Right cardiac atrium (tissue), 5 donors: ENCODE measurements at regions of chr21 and their contacts with region 1.

Region 1: GRCh38 chr21:26850108-26850643 is 5.0 kb upstream of the ADAMTS1 start:
- DNase-seq: no peak
- ATAC-seq: no peak
- H3K4me3 ChIP-seq: no peak overlapping the region
- H3K27ac ChIP-seq: no peak overlapping the region
- H3K4me1 ChIP-seq: no peaks in the 10 kb centered on the region
- H3K27me3 ChIP-seq: no peaks in the 10 kb centered on the region

Region 2: GRCh38 chr21:27564684-27565301 is 714.6 kb after region 1 on chr21:
- intact Hi-C with region 1: loop called in 2 of 4 experiments (anchors 5 to 10 kb)
- DNase-seq: peak; percentile 39 to 61 (median 59)
- ATAC-seq: peak; percentile 72 to 80
- H3K4me3 ChIP-seq: no peak overlapping the region
- H3K27ac ChIP-seq: no peak overlapping the region
- H3K4me1 ChIP-seq: peaks cover under 1% of the 10 kb centered on the region
- H3K27me3 ChIP-seq: no peaks in the 10 kb centered on the region

Region 3: DNA sequence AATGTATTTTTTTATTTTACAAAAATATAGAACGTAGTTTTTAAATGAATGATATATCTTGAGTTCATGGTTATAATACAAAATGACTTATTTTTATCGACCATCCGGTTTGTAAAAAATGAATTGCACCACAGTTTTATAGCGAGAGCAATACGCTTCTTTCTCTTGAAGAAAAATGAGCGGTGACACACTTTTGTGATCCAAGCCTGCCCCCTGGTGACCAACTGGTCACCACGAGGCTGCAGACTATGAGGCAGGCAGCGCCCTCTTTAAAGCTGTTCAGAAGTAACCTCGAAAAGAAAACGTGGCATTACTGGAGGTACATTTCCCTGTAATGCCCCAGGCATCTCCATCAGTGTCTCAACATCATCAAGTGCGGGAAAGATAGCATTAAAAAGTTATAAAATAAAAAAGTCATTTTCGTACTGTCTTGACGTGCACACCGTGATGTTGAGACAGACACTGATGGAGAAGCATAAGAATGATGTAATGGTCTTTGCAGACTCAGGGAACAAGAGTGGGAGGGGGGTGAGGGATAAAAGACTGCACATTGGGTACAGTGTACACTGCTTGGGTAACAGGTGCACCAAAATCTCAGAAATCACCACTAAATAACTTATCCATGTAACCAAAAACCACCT is 850.9 kb after region 1 on chr21:
- intact Hi-C with region 1: loop called (anchors 2 to 5 kb)
- DNase-seq: peak; percentile 85 to 94 (median 90)
- ATAC-seq: peak; percentile 81 to 89
- H3K4me3 ChIP-seq: no peak overlapping the region
- H3K27ac ChIP-seq: no peak overlapping the region
- H3K4me1 ChIP-seq: no peaks in the 10 kb centered on the region
- H3K27me3 ChIP-seq: no peaks in the 10 kb centered on the region

Region 4: DNA sequence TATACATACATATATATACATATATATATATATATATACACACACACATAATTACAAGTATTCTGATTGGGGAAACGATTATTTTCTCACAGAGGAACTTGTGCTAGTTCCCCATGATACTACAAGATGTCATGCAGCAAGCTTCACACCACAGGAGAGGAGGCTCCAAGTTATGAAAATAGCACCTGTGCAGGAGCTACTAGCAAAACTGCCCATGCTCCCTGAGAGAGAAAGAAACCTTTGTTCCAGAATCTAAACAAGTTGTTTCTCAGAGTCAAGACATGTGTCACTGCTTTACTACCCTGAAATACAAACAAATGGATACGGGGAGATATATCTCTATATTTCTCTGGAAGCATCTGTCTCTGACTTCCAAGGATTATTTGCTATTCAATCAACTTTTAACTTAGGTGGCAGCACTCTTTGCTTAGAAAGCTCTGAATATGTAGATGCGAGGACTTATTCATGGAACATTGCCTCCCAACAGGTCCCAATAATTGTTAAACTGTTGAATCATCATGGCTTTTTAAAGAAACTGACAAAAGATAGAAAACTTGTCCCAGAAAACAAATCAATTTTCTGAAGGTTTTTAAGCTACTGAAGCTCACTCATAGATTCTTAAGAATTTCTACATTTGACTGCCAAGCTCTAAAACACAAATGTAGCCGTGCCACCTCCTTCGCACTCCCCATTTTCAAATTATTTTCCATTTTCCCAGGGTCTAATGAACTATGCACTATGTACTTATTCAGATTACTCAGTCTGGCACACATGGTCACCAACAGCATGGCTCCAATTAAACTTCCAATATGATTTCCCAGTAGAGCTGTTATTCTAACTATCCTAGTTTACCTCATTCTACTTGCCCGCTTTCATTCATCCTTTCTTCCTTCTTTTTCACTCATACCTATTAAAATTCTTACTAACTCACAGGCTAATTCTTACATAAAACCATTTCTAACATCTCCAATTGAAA is 1213.4 kb after region 1 on chr21:
- intact Hi-C with region 1: loop called in 2 of 4 experiments (anchors 10 kb)
- DNase-seq: no peak
- ATAC-seq: no peak
- H3K4me3 ChIP-seq: no peak overlapping the region
- H3K27ac ChIP-seq: no peak overlapping the region
- H3K4me1 ChIP-seq: no peaks in the 10 kb centered on the region
- H3K27me3 ChIP-seq: no peaks in the 10 kb centered on the region

Region 5: DNA sequence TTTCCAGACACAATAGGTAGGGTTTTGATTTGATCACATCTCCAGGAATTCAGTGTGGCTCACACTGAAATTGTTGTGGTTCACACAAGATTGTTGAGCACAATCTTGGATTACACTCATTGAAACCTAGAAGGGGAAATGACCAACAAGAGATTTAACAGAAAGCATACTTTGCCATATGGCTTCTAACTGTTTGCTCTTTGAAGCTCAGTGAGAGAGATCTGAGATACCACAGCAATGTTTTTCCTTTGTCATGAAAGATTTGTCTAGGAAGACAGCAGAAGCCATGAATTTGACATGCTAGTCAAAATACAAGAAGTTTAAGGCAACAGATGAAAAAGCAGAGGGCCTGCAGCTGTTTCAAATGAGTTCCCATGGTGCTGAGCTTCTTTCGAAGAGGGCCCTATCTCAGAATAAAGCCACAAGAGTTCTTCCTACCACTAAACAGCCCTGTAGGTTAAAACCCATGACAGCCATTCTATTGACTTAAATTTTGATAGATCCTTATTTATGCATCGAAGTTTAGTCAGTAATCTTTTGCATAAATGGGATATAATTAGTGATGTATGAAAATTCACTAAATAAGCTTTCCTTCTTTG is 1492.1 kb after region 1 on chr21:
- intact Hi-C with region 1: loop called (anchors 5 to 10 kb)
- DNase-seq: no peak
- ATAC-seq: no peak
- H3K4me3 ChIP-seq: no peak overlapping the region
- H3K27ac ChIP-seq: no peak overlapping the region
- H3K4me1 ChIP-seq: peaks cover 1% of the 10 kb centered on the region
- H3K27me3 ChIP-seq: no peaks in the 10 kb centered on the region